ENCODE measurements at regions of chr6 and their contacts with region 1.

Region 1: DNA sequence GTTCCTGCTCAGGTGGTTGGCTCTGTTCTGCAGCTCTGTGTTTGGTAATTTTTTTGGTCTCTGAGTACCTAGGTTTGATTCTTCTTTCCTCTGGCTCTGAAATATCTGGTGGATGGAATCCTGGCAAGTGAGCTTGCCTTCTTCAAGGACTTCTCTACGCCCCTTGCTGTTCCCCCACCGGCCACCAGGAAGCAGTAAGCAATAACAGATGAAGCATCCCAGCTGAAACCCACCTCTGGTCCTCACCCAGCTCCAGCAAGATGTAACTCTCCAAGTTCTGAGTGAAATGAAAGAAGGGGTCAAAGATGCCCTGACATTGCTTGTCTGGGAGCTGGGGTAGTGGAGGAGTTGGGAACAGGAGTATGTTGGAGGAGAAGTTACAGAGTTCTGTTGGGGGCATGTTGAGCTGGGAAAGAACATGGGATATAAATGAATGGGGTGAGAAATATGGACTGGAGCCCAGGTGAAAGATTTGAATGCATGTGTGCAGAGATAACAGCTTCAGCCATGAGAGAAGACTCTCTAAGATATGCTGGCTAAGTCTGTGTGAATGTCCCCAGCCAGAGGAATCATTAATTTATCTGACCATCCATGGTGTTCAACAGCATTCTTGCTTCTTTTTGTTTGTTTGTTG is 51.3 kb upstream of the GLP1R start:
- DNase-seq: peak in 4 of 5 donors; percentile 22 to 60 (median 28)
- ATAC-seq: peak in 1 of 4 donors; percentile 41
- H3K4me3 ChIP-seq: no peak overlapping the region
- H3K27ac ChIP-seq: no peak overlapping the region
- H3K4me1 ChIP-seq: peaks cover 0 to 9% (median 0%) of the 10 kb centered on the region in 12 donors
- H3K27me3 ChIP-seq: peaks cover 0 to 22% (median 4%) of the 10 kb centered on the region in 9 donors
- CTCF ChIP-seq: peak; percentile 29 to 61 (median 44)
- POLR2A ChIP-seq: no peak

Region 2: GRCh38 chr6:38968702-38969149 is 28.5 kb before region 1 on chr6:
- intact Hi-C with region 1: no loop called
- DNase-seq: no peak
- ATAC-seq: no peak
- H3K4me3 ChIP-seq: no peak overlapping the region
- H3K27ac ChIP-seq: no peak overlapping the region
- H3K4me1 ChIP-seq: no peaks in the 10 kb centered on the region
- H3K27me3 ChIP-seq: no peaks in the 10 kb centered on the region
- CTCF ChIP-seq: no peak
- POLR2A ChIP-seq: no peak

Region 3: DNA sequence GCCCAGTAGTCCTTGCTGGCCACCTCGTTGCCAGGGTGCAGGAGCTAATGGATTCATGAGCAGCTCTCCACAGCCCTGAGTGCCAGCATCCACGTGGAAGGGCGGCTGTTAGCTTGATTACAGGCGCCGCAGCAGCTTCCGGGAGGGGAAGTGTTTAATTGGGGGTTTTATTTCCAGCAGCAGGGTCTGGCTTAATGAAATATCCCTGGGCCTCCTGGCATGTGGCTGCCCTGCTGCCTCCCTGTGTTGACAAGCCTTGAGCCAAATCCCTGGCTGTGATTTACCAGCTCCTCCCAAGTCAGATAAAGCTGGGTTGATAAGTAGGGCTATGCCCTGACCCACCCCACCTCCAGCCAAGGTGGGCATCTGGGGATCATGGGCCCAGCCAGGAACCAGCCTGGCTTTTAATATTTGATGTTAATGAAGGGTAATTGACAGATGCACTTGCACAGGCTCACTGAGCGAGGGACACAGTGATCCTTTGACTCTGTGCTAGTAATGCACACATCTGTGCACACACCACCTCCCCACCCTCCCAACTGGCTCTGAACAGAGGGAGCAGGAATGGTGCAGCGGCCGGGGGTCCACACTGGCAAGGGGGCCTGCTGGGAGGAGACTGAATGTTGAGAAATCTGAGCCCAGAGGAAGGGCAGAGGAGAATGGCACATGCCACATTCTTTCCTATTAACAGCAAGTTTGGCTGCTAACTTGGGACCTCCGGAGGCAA is 64.9 kb after region 1 on chr6:
- intact Hi-C with region 1: loop called in 1 of 10 experiments (anchors 5 kb)
- DNase-seq: peak in 1 of 5 donors; percentile 61
- ATAC-seq: peak in 3 of 4 donors; percentile 11 to 27 (median 15)
- H3K4me3 ChIP-seq: no peak overlapping the region
- H3K27ac ChIP-seq: peak overlapping the region in 4 of 12 donors; percentile 14 to 68 (median 46)
- H3K4me1 ChIP-seq: peaks cover 0 to 29% (median 4%) of the 10 kb centered on the region in 12 donors
- H3K27me3 ChIP-seq: peaks cover 0 to 6% (median 0%) of the 10 kb centered on the region in 9 donors
- CTCF ChIP-seq: no peak
- POLR2A ChIP-seq: no peak

Region 4: GRCh38 chr6:39102071-39102820 is 105.0 kb after region 1 on chr6:
- intact Hi-C with region 1: loop called in 1 of 10 experiments (anchors 10 kb)
- DNase-seq: no peak
- ATAC-seq: peak in 2 of 4 donors; percentile 41 to 65
- H3K4me3 ChIP-seq: no peak overlapping the region
- H3K27ac ChIP-seq: no peak overlapping the region
- H3K4me1 ChIP-seq: peaks cover 0 to 5% (median 0%) of the 10 kb centered on the region in 12 donors
- H3K27me3 ChIP-seq: no peaks in the 10 kb centered on the region
- CTCF ChIP-seq: peak in 7 of 12 donors; percentile 22 to 41 (median 27)
- POLR2A ChIP-seq: no peak

Region 5: GRCh38 chr6:39309942-39310531 is 312.8 kb after region 1 on chr6:
- intact Hi-C with region 1: loop called in 1 of 10 experiments (anchors 5 kb)
- DNase-seq: peak; percentile 50 to 82 (median 68)
- ATAC-seq: peak in 3 of 4 donors; percentile 73 to 87 (median 79)
- H3K4me3 ChIP-seq: no peak overlapping the region
- H3K27ac ChIP-seq: no peak overlapping the region
- H3K4me1 ChIP-seq: peaks cover 0 to 17% (median 10%) of the 10 kb centered on the region in 12 donors
- H3K27me3 ChIP-seq: peaks cover 17 to 55% (median 39%) of the 10 kb centered on the region in 9 donors
- CTCF ChIP-seq: peak; percentile 77 to 89 (median 84)
- POLR2A ChIP-seq: no peak